SK-N-SH (cell line): ENCODE measurements at regions of chr7 and their contacts with region 1.

Region 1: GRCh38 chr7:27586825-27587224 is 75.9 kb downstream of the HIBADH start:
- DNase-seq: peak; percentile 67
- H3K4me3 ChIP-seq: no peak overlapping the region
- H3K27ac ChIP-seq: no peak overlapping the region
- H3K4me1 ChIP-seq: peaks cover 0 to 17% of the 10 kb centered on the region in 2 experiments; a peak in 2 of 4 replicates
- H3K27me3 ChIP-seq: no peaks in the 10 kb centered on the region
- CTCF ChIP-seq: no peak
- EP300 ChIP-seq: no peak
- RAD21 ChIP-seq: 0 out of 2 replicates have a peak, but pooled peaks have one; percentile 3

Region 2: DNA sequence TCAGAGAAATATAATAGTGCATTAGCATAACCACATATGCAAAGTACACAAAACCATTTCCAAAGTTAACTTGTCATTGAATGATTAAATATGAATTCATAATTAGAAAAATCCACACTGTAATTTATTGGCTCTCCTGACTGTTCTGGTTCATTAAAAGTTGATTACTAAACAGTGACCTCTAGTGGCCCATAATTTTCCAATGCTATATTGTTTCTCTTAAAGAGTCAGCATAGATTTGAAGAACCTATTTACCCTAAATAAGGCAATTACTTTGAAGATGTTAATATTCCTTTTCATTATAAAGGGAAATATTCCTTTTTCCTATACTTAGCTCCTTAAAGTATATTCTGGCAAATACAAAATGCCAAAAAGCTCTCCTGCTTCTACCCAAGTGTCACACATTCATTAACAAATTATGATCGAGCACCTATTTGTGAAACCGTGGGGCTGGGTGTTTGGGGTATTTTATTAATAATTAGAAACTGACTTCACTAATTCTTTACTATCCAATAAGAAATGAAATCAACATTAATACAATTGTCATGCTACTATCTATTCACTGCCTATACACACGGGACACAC is 10.4 kb before region 1 on chr7:
- CTCF ChIA-PET with region 1: interaction called, 18 read pairs
- POLR2A ChIA-PET with region 1: no interaction called
- DNase-seq: peak; percentile 41
- H3K4me3 ChIP-seq: no peak overlapping the region
- H3K27ac ChIP-seq: no peak overlapping the region
- H3K4me1 ChIP-seq: 0 out of 4 replicates have a peak, but pooled peaks cover 0 to 4% of the 10 kb centered on the region in 2 experiments
- H3K27me3 ChIP-seq: no peaks in the 10 kb centered on the region
- CTCF ChIP-seq: peak; percentile 94
- EP300 ChIP-seq: no peak
- RAD21 ChIP-seq: peak; percentile 83

Region 3: GRCh38 chr7:27605689-27606269 is 19.0 kb after region 1 on chr7:
- CTCF ChIA-PET with region 1: interaction called, 18 read pairs
- POLR2A ChIA-PET with region 1: interaction called, 3 read pairs
- DNase-seq: no peak
- H3K4me3 ChIP-seq: peak overlapping the region in 1 of 2 experiments; percentile 1; a peak in 1 of 4 replicates
- H3K27ac ChIP-seq: peak overlapping the region; percentile 62 to 84
- H3K4me1 ChIP-seq: peaks cover 7 to 12% of the 10 kb centered on the region in 2 experiments; a peak in 3 of 4 replicates
- H3K27me3 ChIP-seq: no peaks in the 10 kb centered on the region
- CTCF ChIP-seq: peak; percentile 70
- EP300 ChIP-seq: no peak
- RAD21 ChIP-seq: peak; percentile 59

Region 4: GRCh38 chr7:27971171-27971812 is 384.5 kb after region 1 on chr7:
- CTCF ChIA-PET with region 1: no interaction called
- POLR2A ChIA-PET with region 1: no interaction called
- DNase-seq: no peak
- H3K4me3 ChIP-seq: no peak overlapping the region
- H3K27ac ChIP-seq: no peak overlapping the region
- H3K4me1 ChIP-seq: peaks cover 0 to 2% of the 10 kb centered on the region in 2 experiments; a peak in 2 of 4 replicates
- H3K27me3 ChIP-seq: no peaks in the 10 kb centered on the region
- CTCF ChIP-seq: no peak
- EP300 ChIP-seq: no peak
- RAD21 ChIP-seq: no peak